ENCODE measurements at regions of chr5 and their contacts with region 1.

Region 1: GRCh38 chr5:32709781-32710549 is 1.2 kb upstream of the NPR3 start:
- DNase-seq: peak; percentile 53
- ATAC-seq: peak; percentile 90
- H3K4me3 ChIP-seq: peak overlapping the region; percentile 57 to 65
- H3K27ac ChIP-seq: no peak overlapping the region
- H3K4me1 ChIP-seq: peaks cover 3 to 12% of the 10 kb centered on the region in 2 experiments; a peak in 3 of 4 replicates
- H3K27me3 ChIP-seq: no peaks in the 10 kb centered on the region
- CTCF ChIP-seq: peak; percentile 67 to 82 (median 77)
- POLR2A ChIP-seq: no peak
- RAD21 ChIP-seq: peak; percentile 55

Region 2: GRCh38 chr5:32852535-32852934 is 142.6 kb after region 1 on chr5:
- CTCF ChIA-PET with region 1: interaction called, 9 read pairs
- POLR2A ChIA-PET with region 1: no interaction called
- RAD21 ChIA-PET with region 1: no interaction called
- intact Hi-C with region 1: loop called (anchors 1 kb)
- DNase-seq: no peak
- ATAC-seq: peak; percentile 76
- H3K4me3 ChIP-seq: no peak overlapping the region
- H3K27ac ChIP-seq: no peak overlapping the region
- H3K4me1 ChIP-seq: no peaks in the 10 kb centered on the region
- H3K27me3 ChIP-seq: peaks cover 3% of the 10 kb centered on the region; the same call in 1 of the 2 replicates
- CTCF ChIP-seq: peak; percentile 33 to 52 (median 43); a peak in 5 of 6 replicates
- POLR2A ChIP-seq: no peak
- RAD21 ChIP-seq: peak; percentile 55

Region 3: GRCh38 chr5:32916648-32917047 is 206.7 kb after region 1 on chr5:
- CTCF ChIA-PET with region 1: interaction called, 9 read pairs
- POLR2A ChIA-PET with region 1: no interaction called
- RAD21 ChIA-PET with region 1: no interaction called
- intact Hi-C with region 1: loop called (anchors 1 kb)
- DNase-seq: peak; percentile 32
- ATAC-seq: peak; percentile 96
- H3K4me3 ChIP-seq: no peak overlapping the region
- H3K27ac ChIP-seq: no peak overlapping the region
- H3K4me1 ChIP-seq: no peaks in the 10 kb centered on the region
- H3K27me3 ChIP-seq: 0 out of 2 replicates have a peak, but pooled peaks cover 5% of the 10 kb centered on the region
- CTCF ChIP-seq: peak; percentile 61 to 72 (median 67); a peak in 5 of 6 replicates
- POLR2A ChIP-seq: no peak
- RAD21 ChIP-seq: peak; percentile 79

Region 4: GRCh38 chr5:33180900-33181299 is 470.9 kb after region 1 on chr5:
- CTCF ChIA-PET with region 1: interaction called, 3 read pairs
- POLR2A ChIA-PET with region 1: no interaction called
- RAD21 ChIA-PET with region 1: no interaction called
- intact Hi-C with region 1: loop called (anchors 1 kb)
- DNase-seq: peak; percentile 28
- ATAC-seq: no peak
- H3K4me3 ChIP-seq: no peak overlapping the region
- H3K27ac ChIP-seq: no peak overlapping the region
- H3K4me1 ChIP-seq: no peaks in the 10 kb centered on the region
- H3K27me3 ChIP-seq: no peaks in the 10 kb centered on the region
- CTCF ChIP-seq: peak; percentile 36 to 63 (median 59); a peak in 5 of 6 replicates
- POLR2A ChIP-seq: no peak
- RAD21 ChIP-seq: peak; percentile 76

Region 5: DNA sequence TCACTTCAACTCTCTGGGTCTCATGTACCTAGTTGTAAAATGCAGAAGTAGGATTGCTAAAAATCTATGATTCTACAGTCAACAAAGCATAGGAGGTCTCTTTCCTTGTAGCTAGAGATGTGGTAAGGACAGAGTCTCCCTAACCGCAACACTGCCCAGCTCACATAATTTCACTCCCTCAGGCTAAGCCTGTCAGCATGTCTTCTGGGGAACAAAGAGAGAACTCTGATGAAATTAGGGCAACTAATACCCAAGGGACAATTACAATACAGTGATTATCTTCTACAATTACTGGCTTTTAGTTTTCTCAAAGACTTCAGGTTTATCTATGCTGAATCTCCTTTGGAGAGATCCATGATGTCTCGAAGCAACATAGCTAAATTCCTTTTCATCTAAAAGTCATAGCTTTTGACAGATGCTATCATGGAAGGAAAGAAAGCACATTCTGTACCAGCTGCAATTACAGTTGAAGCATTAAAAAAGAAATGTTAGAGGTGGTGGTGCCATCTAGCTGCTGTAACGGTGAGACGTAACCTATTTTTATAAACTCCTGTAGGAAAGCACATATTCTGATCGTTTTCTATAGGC is 589.8 kb after region 1 on chr5:
- CTCF ChIA-PET with region 1: no interaction called
- POLR2A ChIA-PET with region 1: no interaction called
- RAD21 ChIA-PET with region 1: interaction called in 1 of 2 experiments, 3 read pairs
- intact Hi-C with region 1: loop called (anchors 2 kb)
- DNase-seq: peak; percentile 12
- ATAC-seq: peak; percentile 82
- H3K4me3 ChIP-seq: no peak overlapping the region
- H3K27ac ChIP-seq: no peak overlapping the region
- H3K4me1 ChIP-seq: no peaks in the 10 kb centered on the region
- H3K27me3 ChIP-seq: no peaks in the 10 kb centered on the region
- CTCF ChIP-seq: peak; percentile 37 to 59 (median 42); a peak in 5 of 6 replicates
- POLR2A ChIP-seq: no peak
- RAD21 ChIP-seq: peak; percentile 60

Region 6: DNA sequence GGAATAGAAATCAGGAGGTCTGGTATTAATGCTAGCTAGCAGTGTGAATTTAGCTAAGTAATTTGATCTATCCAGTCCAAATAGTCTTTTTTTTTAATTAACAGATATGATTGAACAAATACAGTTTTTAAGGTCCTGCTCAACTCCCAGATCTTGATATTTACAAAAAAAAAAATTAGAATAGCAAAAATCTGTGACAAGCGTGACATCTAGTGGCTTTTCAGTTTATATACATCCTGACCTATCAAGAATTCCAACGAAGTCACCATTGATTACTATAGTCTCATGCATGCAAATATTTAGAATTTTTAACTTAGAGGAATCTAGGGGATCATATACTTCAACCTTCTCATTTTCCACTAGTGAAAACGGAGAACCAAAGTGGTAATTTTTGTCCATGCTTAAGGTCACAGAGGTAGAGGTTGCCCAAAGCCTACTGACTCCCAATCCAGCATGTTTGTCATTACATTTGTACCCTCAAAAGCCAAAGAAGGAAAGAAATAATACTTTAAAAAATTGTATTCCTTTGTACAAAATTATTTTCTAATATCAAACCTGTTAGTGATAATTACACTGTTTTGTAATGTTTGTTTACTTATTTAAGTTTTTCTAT is 713.2 kb after region 1 on chr5:
- CTCF ChIA-PET with region 1: interaction called, 3 read pairs
- POLR2A ChIA-PET with region 1: no interaction called
- RAD21 ChIA-PET with region 1: no interaction called
- intact Hi-C with region 1: loop called (anchors 2 kb)
- DNase-seq: peak; percentile 23
- ATAC-seq: peak; percentile 74
- H3K4me3 ChIP-seq: no peak overlapping the region
- H3K27ac ChIP-seq: no peak overlapping the region
- H3K4me1 ChIP-seq: no peaks in the 10 kb centered on the region
- H3K27me3 ChIP-seq: no peaks in the 10 kb centered on the region
- CTCF ChIP-seq: peak; percentile 34 to 50 (median 38); a peak in 5 of 6 replicates
- POLR2A ChIP-seq: no peak
- RAD21 ChIP-seq: peak; percentile 63

Measured in HCT116 (cell line).